PC-3 (cell line): ENCODE measurements at regions of chr4 and their contacts with region 1.

Region 1: GRCh38 chr4:3346146-3346545 is 53.3 kb downstream of the RGS12 start:
- DNase-seq: peak; percentile 78
- ATAC-seq: peak; percentile 74
- H3K4me3 ChIP-seq: no peak overlapping the region
- H3K27ac ChIP-seq: no peak overlapping the region
- H3K4me1 ChIP-seq: peaks cover 11% of the 10 kb centered on the region; the same call in 1 of the 2 replicates
- H3K27me3 ChIP-seq: no peaks in the 10 kb centered on the region
- CTCF ChIP-seq: peak; percentile 81

Region 2: GRCh38 chr4:3193531-3194203 is 152.5 kb before region 1 on chr4:
- CTCF ChIA-PET with region 1: no interaction called
- POLR2A ChIA-PET with region 1: no interaction called
- intact Hi-C with region 1: no loop called
- DNase-seq: peak; percentile 16
- ATAC-seq: no peak
- H3K4me3 ChIP-seq: no peak overlapping the region
- H3K27ac ChIP-seq: no peak overlapping the region
- H3K4me1 ChIP-seq: no peaks in the 10 kb centered on the region
- H3K27me3 ChIP-seq: no peaks in the 10 kb centered on the region
- CTCF ChIP-seq: peak; percentile 56; the same call in 1 of the 2 replicates

Region 3: GRCh38 chr4:3388471-3389232 is 42.5 kb after region 1 on chr4:
- CTCF ChIA-PET with region 1: no interaction called
- POLR2A ChIA-PET with region 1: no interaction called
- intact Hi-C with region 1: loop called (anchors 2 kb)
- DNase-seq: peak; percentile 81
- ATAC-seq: peak; percentile 75
- H3K4me3 ChIP-seq: peak overlapping the region; percentile 63
- H3K27ac ChIP-seq: peak overlapping the region; percentile 91
- H3K4me1 ChIP-seq: peaks cover 25% of the 10 kb centered on the region
- H3K27me3 ChIP-seq: no peaks in the 10 kb centered on the region
- CTCF ChIP-seq: no peak

Region 4: DNA sequence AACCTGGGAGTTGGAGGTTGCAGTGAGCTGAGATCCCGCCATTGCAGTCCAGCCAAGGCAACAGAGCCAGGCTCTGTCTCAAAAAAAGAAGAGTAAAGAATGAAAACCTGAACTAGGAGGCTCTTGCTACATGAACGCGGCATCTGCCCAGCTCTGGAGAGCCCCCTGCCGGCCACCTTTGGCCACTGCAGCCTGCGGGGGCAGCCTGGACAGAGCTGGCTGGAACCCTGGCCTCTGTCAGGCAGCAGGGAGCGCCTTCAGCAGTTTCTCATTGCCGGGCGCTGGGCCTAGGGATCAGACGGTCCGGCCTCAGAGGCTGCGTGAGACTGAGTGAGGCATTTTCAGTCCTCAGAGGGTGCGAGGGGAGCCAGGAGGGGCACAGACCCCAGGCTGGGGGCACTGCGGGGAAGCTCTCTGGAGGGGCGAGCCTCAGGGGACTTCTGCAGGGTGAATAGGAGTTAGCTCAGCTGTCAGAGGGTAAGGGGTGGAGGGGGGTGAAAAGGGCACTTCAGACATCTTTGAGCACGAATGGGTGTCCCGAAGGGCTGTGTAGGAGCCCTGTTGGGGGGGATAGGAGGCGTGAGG is 134.5 kb after region 1 on chr4:
- CTCF ChIA-PET with region 1: interaction called, 4 read pairs
- POLR2A ChIA-PET with region 1: no interaction called
- intact Hi-C with region 1: loop called (anchors 1 kb)
- DNase-seq: peak; percentile 74
- ATAC-seq: peak; percentile 49
- H3K4me3 ChIP-seq: no peak overlapping the region
- H3K27ac ChIP-seq: no peak overlapping the region
- H3K4me1 ChIP-seq: peaks cover 23% of the 10 kb centered on the region
- H3K27me3 ChIP-seq: no peaks in the 10 kb centered on the region
- CTCF ChIP-seq: peak; percentile 85